T-cell (primary cell): ENCODE measurements at regions of chr4 and their contacts with region 1.

Region 1: DNA sequence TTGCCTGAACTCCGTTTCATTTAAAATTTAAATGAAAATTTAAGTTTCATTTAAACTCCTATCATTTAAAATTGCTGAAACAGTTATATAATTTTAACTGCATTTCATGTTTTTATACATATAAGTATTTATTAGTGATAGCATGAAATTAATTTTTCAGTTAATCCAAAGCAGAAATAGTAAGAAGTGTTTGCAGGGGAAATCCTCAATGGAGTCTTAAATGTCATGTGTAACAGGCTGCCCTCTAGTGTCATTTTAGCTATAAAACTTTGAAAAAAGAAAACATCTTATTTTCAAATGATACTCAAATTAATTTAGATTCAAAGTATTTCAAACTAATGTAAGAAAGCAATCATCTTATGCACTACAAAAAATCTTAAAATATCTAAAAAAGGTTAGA is 27.2 kb downstream of the TAPT1 start:
- DNase-seq: peak in 1 of 35 experiments; percentile 23
- ATAC-seq: no peak
- H3K4me3 ChIP-seq: no peak overlapping the region
- H3K4me3 Mint-ChIP-seq: no peak overlapping the region
- H3K27ac ChIP-seq: no peak overlapping the region
- H3K27ac Mint-ChIP-seq: no peak overlapping the region
- H3K4me1 ChIP-seq: peaks cover 0 to 11% of the 10 kb centered on the region in 2 experiments
- H3K4me1 Mint-ChIP-seq: peaks cover 29 to 48% (median 30%) of the 10 kb centered on the region in 3 donors
- H3K27me3 ChIP-seq: no peaks in the 10 kb centered on the region
- H3K27me3 Mint-ChIP-seq: no peaks in the 10 kb centered on the region

Region 2: DNA sequence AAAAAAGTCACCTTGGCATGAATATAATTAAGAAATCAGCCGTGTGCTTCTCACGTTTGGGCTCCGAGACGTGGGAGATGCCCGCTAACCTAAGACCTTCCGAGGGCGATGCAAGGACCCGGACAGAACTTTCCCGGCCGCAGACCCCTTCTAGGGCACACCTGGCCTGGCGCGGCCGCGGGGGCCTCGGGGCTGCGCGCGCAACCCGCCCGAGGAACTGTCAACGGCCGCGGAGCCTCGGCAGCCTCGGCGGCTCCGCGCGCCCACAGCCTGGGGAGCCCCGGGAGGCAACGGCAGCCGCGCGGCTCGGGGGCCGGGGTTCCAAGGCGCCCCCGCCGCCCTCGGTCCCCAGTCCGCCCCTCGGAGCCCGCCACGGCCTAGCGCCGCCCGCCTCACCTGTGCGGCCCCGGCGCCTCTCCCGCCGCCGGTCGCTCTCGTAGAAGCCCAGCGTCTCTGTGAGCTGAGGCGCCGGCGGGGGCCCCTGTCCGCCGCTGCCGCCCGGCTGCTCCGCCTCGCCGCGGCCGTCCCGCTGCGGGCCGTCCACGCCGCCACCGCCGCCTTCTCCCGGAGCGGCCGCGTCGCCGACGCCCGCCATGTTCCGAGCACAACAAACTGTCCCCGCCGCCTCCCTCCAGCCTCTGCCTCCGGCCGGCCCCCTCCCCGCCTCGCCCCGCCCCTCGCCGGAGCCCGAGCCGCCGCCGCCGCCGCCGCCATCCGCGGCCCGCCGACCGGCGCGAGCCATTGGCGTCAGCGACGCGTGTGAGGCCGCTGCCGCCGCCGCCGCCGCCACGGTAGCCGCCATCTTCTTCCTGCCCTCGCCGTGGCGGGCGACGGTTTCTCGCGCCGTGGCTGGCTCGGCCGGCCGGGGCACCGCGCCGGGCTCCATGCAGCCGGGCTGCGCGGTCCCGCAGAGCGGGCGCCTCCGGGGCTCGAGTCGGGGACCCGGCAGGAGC is 27.0 kb after region 1 on chr4 and contains the start of gene TAPT1:
- CTCF ChIA-PET with region 1: interaction called in 1 of 2 experiments, 10 read pairs
- POLR2A ChIA-PET with region 1: no interaction called
- DNase-seq: peak; percentile 23 to 85 (median 55)
- ATAC-seq: peak; percentile 74 to 79 (median 76)
- H3K4me3 ChIP-seq: peak within 1 kb of the TSS; percentile 69 to 88
- H3K4me3 Mint-ChIP-seq: peak within 1 kb of the TSS; percentile 92 to 96 (median 94)
- H3K27ac ChIP-seq: peak within 1 kb of the TSS; percentile 78
- H3K27ac Mint-ChIP-seq: peak within 1 kb of the TSS; percentile 96 to 97
- H3K4me1 ChIP-seq: peaks cover 21 to 25% of the 10 kb centered on the region in 2 experiments
- H3K4me1 Mint-ChIP-seq: peaks cover 55 to 56% (median 56%) of the 10 kb centered on the region in 3 donors
- H3K27me3 ChIP-seq: no peaks in the 10 kb centered on the region
- H3K27me3 Mint-ChIP-seq: no peaks in the 10 kb centered on the region
- total RNA-seq, gene TAPT1: 41.1 to 77.9 (median 50.3) TPM

Region 3: GRCh38 chr4:16264798-16265197 is 65.7 kb after region 1 on chr4:
- CTCF ChIA-PET with region 1: interaction called, 3 to 10 read pairs
- POLR2A ChIA-PET with region 1: no interaction called
- DNase-seq: peak in 1 of 35 experiments; percentile 66
- ATAC-seq: peak in 2 of 4 experiments; percentile 50 to 56
- H3K4me3 ChIP-seq: no peak overlapping the region
- H3K4me3 Mint-ChIP-seq: no peak overlapping the region
- H3K27ac ChIP-seq: no peak overlapping the region
- H3K27ac Mint-ChIP-seq: no peak overlapping the region
- H3K4me1 ChIP-seq: peaks cover 0 to 2% of the 10 kb centered on the region in 2 experiments
- H3K4me1 Mint-ChIP-seq: peaks cover 5 to 15% (median 10%) of the 10 kb centered on the region in 3 donors
- H3K27me3 ChIP-seq: no peaks in the 10 kb centered on the region
- H3K27me3 Mint-ChIP-seq: no peaks in the 10 kb centered on the region